ENCODE measurements at regions of chr5 and their contacts with region 1.

Region 1: DNA sequence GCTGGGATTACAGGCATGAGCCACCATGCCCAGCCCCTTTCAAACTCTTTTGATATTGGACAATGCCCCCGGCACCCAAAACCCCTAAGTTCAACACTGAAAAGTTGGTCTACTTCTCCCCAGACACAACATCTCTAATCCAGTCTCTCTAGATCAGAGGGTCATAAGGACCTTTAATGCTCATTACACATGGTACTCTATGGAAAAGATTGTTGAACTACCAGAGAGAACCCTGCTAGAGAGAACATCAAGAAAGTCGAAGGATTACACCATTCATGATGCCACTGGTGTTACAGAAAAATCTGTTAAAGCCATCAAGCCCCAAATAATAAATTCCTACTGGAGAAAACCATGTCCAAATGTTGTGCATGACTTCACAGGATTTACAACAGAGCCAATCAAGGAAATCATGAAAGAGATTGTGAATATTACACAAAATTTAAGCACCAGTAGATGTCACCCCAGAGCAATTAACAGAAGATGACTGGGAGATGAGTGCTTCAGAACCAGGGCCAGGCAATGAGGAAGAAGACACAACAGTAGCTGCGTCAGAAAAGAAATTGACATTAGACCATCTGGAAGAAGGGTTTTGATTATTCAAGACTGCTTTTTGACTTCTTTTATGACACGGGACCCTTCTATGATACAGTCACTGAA is 28.3 kb upstream of the NIPAL4 start:
- DNase-seq: peak; percentile 90
- ATAC-seq: peak; percentile 96
- H3K4me3 ChIP-seq: no peak overlapping the region
- H3K27ac ChIP-seq: no peak overlapping the region; the same call in 1 of the 2 replicates
- H3K4me1 ChIP-seq: peaks cover 8% of the 10 kb centered on the region
- H3K27me3 ChIP-seq: no peaks in the 10 kb centered on the region
- CTCF ChIP-seq: peak; percentile 88

Region 2: DNA sequence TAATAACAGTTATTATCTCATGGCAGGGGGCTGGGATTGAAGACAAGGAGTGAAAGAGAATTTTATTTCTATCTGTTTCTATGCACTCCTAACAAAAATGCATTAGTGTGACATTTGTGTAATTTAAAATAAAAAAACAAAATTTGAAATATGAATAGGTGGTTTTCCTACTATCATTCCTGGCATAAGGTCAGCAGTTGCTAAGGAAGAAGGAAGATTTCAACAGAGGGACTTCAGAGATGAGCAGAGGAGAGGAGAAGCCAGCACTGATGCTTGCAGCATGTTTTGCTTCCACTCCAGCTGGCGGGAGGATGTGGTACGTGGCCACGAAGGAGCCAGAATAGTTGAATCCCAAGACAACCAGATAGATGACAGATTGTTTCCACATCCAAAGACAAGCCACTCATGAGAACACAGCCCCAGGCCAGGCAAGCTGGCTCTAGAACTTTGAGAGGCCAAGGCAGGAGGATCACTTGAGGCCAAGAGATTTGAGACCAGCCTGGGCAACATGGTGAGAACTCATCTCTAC is 483.8 kb before region 1 on chr5:
- CTCF ChIA-PET with region 1: no interaction called
- POLR2A ChIA-PET with region 1: no interaction called
- intact Hi-C with region 1: no loop called
- DNase-seq: no peak
- ATAC-seq: no peak
- H3K4me3 ChIP-seq: no peak overlapping the region
- H3K27ac ChIP-seq: no peak overlapping the region
- H3K4me1 ChIP-seq: no peaks in the 10 kb centered on the region
- H3K27me3 ChIP-seq: peaks cover 38% of the 10 kb centered on the region
- CTCF ChIP-seq: no peak

Region 3: DNA sequence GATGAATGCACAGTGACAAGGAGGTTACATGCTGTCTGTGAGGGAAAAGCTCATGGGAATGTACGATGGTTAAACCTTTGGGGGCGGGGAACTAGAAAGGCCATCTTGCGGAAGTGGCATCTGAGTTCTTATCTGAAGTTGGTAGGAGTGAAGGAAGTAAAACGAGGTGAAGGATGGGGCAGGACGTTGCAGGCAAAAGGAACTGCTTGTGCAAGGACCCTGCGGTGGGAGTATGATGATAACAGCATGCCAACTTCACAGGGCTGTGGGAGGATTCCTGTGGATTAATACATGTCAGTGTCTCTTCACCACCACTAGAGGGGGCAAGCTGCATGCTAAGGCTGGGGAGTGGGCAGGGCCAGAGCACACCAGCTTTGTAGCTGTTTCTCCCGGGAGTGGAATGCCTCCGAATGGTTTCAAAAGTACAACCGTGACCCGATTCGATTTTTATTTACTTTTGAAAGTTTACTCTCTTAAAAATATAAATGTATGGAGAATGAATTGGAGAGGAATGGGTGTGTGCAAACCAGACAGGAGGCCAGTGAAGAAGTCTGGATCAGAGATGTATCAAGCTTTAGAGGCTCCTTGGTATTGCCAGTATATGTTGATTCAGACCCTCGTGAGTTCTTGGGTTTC is 103.3 kb before region 1 on chr5:
- CTCF ChIA-PET with region 1: interaction called, 4 read pairs
- POLR2A ChIA-PET with region 1: no interaction called
- intact Hi-C with region 1: loop called (anchors 1 kb)
- DNase-seq: peak; percentile 90
- ATAC-seq: peak; percentile 100
- H3K4me3 ChIP-seq: peak overlapping the region; percentile 61
- H3K27ac ChIP-seq: no peak overlapping the region
- H3K4me1 ChIP-seq: peaks cover 13% of the 10 kb centered on the region
- H3K27me3 ChIP-seq: no peaks in the 10 kb centered on the region
- CTCF ChIP-seq: peak; percentile 99

Region 4: DNA sequence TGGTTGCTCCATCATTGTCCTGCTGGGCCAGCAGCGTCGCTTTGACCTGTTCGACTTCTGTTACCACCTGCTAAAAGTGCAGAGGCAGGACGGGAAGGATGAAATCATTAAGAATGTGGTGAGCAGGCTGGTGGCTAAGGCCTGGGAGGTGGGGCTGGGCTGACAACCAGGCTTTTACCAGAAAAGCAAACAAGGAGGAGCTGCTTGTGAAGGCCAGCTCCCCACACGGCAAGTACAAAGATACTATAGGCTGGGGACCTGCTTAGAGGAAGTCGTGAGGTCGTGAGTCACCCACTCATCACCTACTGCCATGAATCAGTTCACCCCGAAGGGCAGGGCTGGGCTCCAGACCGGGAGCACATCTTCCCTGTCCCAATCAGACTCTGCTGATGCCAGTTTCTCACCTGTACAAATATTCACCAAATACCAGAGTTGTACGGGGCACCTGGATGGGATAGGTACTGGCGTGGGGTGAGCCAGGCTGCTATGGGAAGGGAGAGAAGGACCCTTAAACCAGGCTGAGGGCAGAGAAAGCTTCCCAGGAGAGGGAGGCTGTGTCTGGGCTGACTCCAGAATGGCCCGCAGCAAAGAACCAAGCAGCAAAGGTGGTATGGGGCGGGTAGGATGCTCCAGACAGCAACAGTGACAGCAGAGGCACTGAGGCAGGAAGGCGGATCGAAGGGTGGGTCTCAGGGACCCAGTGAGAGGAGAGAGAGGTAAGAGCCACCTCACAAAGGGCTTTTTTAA is 40.9 kb before region 1 on chr5:
- CTCF ChIA-PET with region 1: no interaction called
- POLR2A ChIA-PET with region 1: no interaction called
- intact Hi-C with region 1: loop called (anchors 1 kb)
- DNase-seq: peak; percentile 100
- ATAC-seq: peak; percentile 93
- H3K4me3 ChIP-seq: peak overlapping the region; percentile 30
- H3K27ac ChIP-seq: peak overlapping the region; percentile 87
- H3K4me1 ChIP-seq: peaks cover 59% of the 10 kb centered on the region
- H3K27me3 ChIP-seq: no peaks in the 10 kb centered on the region
- CTCF ChIP-seq: no peak

Region 5: GRCh38 chr5:157459715-157460599 is 28.3 kb after region 1 on chr5 and contains the start of gene NIPAL4:
- CTCF ChIA-PET with region 1: no interaction called
- POLR2A ChIA-PET with region 1: no interaction called
- intact Hi-C with region 1: no loop called
- DNase-seq: no peak
- ATAC-seq: peak; percentile 50
- H3K4me3 ChIP-seq: peak within 1 kb of the TSS; percentile 67
- H3K27ac ChIP-seq: no peak within 1 kb of the TSS
- H3K4me1 ChIP-seq: peaks cover 18% of the 10 kb centered on the region
- H3K27me3 ChIP-seq: no peaks in the 10 kb centered on the region
- CTCF ChIP-seq: no peak
- total RNA-seq, gene NIPAL4: 1.0 and 1.8 TPM in 2 replicates

Region 6: GRCh38 chr5:157476702-157477408 is 45.2 kb after region 1 on chr5:
- CTCF ChIA-PET with region 1: interaction called, 15 read pairs
- POLR2A ChIA-PET with region 1: no interaction called
- intact Hi-C with region 1: loop called (anchors 1 kb)
- DNase-seq: peak; percentile 91
- ATAC-seq: peak; percentile 41
- H3K4me3 ChIP-seq: no peak overlapping the region
- H3K27ac ChIP-seq: no peak overlapping the region
- H3K4me1 ChIP-seq: peaks cover 36% of the 10 kb centered on the region
- H3K27me3 ChIP-seq: no peaks in the 10 kb centered on the region
- CTCF ChIP-seq: peak; percentile 99

Region 7: DNA sequence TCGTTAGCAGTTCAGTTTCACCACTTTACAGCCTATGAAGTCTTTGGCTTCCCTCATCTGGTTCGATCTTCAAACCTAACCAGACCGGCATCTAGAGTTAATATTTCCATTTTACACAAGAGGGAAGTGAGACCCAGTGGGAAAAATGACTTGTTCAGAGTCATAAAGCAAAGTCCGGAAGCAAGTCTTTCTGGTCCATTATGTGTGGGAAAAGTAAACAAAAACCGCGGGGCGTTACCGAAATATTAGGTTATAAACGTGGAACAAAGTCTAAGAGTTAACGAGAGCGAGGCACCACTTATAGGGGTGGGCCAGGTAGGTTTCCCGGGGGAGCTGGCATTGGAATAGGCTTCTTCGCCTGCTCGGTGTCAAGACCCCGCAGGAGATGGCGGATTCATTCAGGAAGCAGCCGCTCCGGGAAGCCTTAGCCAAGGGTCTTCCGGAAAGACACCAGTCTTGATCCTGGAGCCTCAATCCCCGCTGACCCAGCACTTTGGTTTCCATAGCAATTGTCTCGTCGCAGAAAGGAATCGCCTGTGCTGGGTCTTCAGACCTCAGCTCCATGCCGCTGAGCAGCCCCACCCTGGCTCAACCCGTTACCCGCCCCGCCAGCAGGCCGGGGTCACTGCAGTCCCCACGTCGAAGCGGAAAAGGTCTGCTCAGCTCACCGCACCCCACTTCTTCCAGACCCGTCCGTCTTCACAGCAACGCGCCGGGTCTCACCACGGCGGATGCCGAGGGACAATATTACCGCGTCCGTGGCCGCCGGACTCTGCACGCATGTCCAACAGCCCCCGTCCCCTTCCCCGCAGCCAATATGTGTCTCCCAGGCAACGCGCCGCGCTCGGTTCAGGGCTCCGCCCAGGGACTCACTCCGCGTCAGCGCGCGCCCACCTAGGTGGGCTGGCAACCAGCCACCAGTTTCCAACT is 239.3 kb after region 1 on chr5 and contains the start of gene C5orf52:
- CTCF ChIA-PET with region 1: no interaction called
- POLR2A ChIA-PET with region 1: no interaction called
- intact Hi-C with region 1: loop called (anchors 1 kb)
- DNase-seq: peak; percentile 96
- ATAC-seq: peak; percentile 58
- H3K4me3 ChIP-seq: peak within 1 kb of the TSS; percentile 64
- H3K27ac ChIP-seq: peak within 1 kb of the TSS; percentile 91
- H3K4me1 ChIP-seq: peaks cover 29% of the 10 kb centered on the region
- H3K27me3 ChIP-seq: no peaks in the 10 kb centered on the region
- CTCF ChIP-seq: no peak
- total RNA-seq, gene C5orf52: 0.84 TPM in 1 of 2 replicates, not detected in the other

Region 8: GRCh38 chr5:157681048-157681447 is 249.4 kb after region 1 on chr5:
- CTCF ChIA-PET with region 1: no interaction called
- POLR2A ChIA-PET with region 1: no interaction called
- intact Hi-C with region 1: no loop called
- DNase-seq: no peak
- ATAC-seq: no peak
- H3K4me3 ChIP-seq: no peak overlapping the region
- H3K27ac ChIP-seq: no peak overlapping the region
- H3K4me1 ChIP-seq: no peaks in the 10 kb centered on the region
- H3K27me3 ChIP-seq: no peaks in the 10 kb centered on the region
- CTCF ChIP-seq: no peak

Region 9: DNA sequence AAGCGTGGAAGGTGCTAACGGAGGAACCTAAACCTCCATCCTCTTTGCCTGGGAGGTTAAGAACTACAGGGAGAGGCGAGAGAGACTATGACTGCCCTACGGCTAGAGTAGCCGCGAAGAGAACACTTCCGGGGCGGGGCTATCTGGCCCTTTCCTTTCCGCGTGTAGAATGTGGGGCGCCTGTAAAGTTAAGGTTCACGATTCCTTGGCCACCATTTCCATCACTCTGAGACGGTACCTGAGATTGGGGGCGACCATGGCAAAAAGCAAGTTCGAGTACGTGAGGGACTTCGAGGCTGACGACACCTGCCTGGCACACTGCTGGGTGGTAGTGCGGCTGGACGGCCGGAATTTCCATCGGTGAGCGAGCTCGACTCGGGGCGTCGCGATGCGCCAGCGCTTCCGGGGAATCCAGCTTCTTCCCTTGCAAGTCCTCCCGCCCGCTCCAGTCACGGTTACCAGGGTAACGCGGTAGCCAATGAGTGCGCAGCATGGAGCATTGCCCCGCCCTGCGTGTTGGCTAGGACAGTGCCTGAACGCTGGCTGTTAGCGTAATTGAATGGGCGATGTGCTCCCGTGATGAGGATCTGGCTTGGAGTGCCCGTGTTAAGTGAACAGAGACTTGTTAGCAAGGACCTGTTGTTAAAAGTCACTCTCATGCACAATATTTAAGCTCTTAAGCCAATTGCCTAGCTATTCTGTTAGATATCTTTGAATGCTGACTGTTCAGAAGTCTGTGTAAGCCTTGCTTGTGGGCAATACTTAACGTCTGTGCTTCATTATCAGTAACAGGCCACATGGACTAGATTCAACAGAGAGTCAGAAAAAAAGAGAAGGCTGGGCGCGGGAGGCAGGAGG is 299.8 kb after region 1 on chr5 and contains the start of gene THG1L:
- CTCF ChIA-PET with region 1: interaction called, 12 read pairs
- POLR2A ChIA-PET with region 1: no interaction called
- intact Hi-C with region 1: no loop called
- DNase-seq: peak; percentile 100
- ATAC-seq: peak; percentile 99
- H3K4me3 ChIP-seq: peak within 1 kb of the TSS; percentile 78
- H3K27ac ChIP-seq: peak within 1 kb of the TSS; percentile 82
- H3K4me1 ChIP-seq: peaks cover 15% of the 10 kb centered on the region
- H3K27me3 ChIP-seq: no peaks in the 10 kb centered on the region
- CTCF ChIP-seq: no peak
- total RNA-seq, gene THG1L: 45.1 and 45.3 TPM in 2 replicates